GM12878 (cell line): ENCODE measurements at regions of chr3 and their contacts with region 1.

Region 1: DNA sequence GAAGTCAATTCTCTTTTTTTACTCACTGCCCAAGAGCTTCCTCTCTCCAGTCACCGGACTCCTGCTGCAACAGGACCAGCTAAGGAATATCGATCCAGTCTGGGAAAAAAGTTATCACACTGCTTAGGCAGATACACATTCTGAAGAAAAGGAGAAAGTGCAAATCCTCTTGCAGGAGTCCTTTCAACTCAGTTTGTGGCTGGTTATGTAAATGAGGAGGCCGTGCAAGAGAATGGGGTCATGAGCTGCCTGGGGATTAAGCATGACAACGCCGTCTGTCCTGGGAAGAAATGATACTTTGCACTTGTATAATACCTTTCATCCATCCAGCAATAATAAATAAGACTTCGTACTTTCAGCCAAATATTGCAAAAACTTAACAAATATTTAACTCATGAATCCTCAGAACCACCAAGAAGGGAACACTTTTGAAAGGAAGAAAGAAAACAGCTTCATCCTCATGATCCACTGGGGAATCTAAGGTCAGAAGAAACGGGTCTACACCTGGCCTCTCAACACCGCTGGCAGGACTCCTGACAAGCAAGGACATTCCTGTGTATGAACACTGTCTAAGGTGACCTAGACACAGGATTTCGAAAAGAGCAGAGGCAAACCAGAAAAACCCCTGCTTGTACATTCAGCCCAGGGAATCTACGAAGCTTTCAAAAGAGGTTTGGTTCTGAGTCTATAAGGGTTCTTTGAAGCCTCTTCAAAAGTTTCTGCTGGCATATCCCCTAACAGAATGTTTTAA is 13.1 kb upstream of the WWTR1 start:
- DNase-seq: no peak
- ATAC-seq: peak; percentile 72
- H3K4me3 ChIP-seq: peak overlapping the region; percentile 4
- H3K27ac ChIP-seq: no peak overlapping the region
- H3K4me1 ChIP-seq: no peaks in the 10 kb centered on the region; the same call in 1 of the 2 replicates
- H3K27me3 ChIP-seq: no peaks in the 10 kb centered on the region
- CTCF ChIP-seq: no peak
- EP300 ChIP-seq: no peak
- POLR2A ChIP-seq: no peak
- RAD21 ChIP-seq: no peak

Region 2: GRCh38 chr3:149377408-149378377 is 293.2 kb before region 1 on chr3 and contains the start of gene TM4SF1:
- CTCF ChIA-PET with region 1: no interaction called
- POLR2A ChIA-PET with region 1: no interaction called
- RAD21 ChIA-PET with region 1: no interaction called
- SMC1A ChIA-PET with region 1: no interaction called
- in situ Hi-C with region 1: no loop called
- intact Hi-C with region 1: no loop called
- DNase-seq: no peak
- ATAC-seq: no peak
- H3K4me3 ChIP-seq: no peak within 1 kb of the TSS
- H3K27ac ChIP-seq: no peak within 1 kb of the TSS
- H3K4me1 ChIP-seq: no peaks in the 10 kb centered on the region
- H3K27me3 ChIP-seq: no peaks in the 10 kb centered on the region
- CTCF ChIP-seq: no peak
- EP300 ChIP-seq: no peak
- POLR2A ChIP-seq: no peak
- RAD21 ChIP-seq: no peak
- polyA plus RNA-seq, gene TM4SF1: not detected

Region 3: DNA sequence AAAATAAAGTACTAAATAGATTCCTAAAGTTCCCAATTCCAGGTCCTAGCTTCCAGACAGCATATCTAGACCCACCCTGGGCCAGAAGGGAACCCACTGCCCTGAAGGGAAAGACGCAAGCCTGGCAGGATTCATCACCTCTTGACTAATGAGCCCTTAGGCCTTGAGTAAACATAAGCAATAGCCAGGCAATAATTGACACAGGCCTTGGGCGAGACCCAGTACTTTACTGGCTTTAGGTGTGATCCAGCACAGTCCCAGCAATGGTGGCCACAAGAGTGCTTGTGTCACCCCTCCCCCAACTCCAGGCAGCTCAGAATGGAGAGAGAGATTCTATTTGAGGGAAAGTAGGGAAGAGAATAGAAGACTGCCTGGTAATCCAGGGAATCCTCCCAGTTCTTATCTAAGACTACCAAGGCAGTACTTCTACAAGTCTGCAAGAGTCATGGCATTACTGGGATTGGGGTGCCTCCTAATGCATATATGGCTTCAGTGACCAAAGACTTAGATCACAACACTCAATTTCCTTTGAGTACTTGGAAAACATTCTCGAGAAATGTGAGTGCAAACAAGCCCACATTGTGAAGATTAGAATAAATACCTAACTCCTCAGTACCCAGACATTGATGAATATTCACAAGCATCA is 17.3 kb after region 1 on chr3:
- CTCF ChIA-PET with region 1: no interaction called
- POLR2A ChIA-PET with region 1: no interaction called
- RAD21 ChIA-PET with region 1: no interaction called
- SMC1A ChIA-PET with region 1: interaction called, 10 read pairs
- in situ Hi-C with region 1: no loop called
- intact Hi-C with region 1: no loop called
- DNase-seq: no peak
- ATAC-seq: no peak
- H3K4me3 ChIP-seq: no peak overlapping the region
- H3K27ac ChIP-seq: no peak overlapping the region
- H3K4me1 ChIP-seq: no peaks in the 10 kb centered on the region
- H3K27me3 ChIP-seq: no peaks in the 10 kb centered on the region
- CTCF ChIP-seq: no peak
- EP300 ChIP-seq: no peak
- POLR2A ChIP-seq: no peak
- RAD21 ChIP-seq: no peak